CD4-positive, alpha-beta memory T cell (primary cell): ENCODE measurements at regions of chr10 and their contacts with region 1.

Region 1: DNA sequence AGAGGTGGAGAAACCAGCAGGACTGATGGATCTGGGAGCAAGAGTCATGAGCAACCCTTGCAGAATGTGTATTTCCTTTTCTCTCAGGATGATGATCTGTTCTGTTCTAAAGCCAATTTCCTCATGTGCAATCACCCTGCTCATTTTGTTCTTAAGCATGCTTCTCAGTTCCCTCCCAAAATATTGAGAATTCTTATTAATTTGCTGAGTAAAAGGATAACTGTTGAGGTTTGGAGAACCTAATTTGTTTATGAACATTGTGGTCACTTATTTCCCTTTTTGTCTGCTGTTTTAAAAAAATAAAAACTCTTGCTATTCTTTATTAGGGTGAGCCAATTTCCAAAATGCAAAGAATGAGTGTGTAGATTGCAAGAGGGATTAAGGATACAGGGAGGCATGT is 106.8 kb downstream of the APBB1IP start:
- DNase-seq: no peak
- H3K4me3 ChIP-seq: no peak overlapping the region
- H3K4me3 Mint-ChIP-seq: no peak overlapping the region
- H3K27ac ChIP-seq: no peak overlapping the region
- H3K27ac Mint-ChIP-seq: peak overlapping the region in 5 of 7 donors; percentile 42 to 93 (median 79)
- H3K4me1 ChIP-seq: peaks cover 3% of the 10 kb centered on the region
- H3K4me1 Mint-ChIP-seq: peaks cover 8 to 23% (median 15%) of the 10 kb centered on the region in 4 donors
- H3K27me3 ChIP-seq: no peaks in the 10 kb centered on the region
- H3K27me3 Mint-ChIP-seq: no peaks in the 10 kb centered on the region

Region 2: DNA sequence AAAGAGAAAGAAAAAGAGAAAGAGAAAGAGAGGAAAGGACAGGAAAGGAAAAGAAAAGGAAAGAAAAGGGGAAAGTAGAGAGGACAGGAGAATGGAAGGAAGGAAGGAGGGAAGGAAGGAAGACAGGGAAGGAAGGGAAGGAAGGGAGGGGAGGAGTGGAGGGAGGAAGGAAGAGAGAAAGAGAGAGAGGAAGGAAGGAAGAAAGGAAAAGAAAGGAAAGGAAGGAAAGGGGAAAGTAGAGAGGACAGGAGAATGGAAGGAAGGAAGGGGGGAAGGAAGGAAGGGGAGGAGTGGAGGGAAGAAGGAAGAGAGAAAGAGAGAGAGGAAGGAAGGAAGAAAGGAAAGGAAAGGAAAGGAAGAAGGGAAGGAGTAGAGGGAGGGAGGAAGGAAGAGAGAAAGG is 203.2 kb before region 1 on chr10:
- CTCF ChIA-PET with region 1: no interaction called
- POLR2A ChIA-PET with region 1: no interaction called
- intact Hi-C with region 1: no loop called
- DNase-seq: no peak
- H3K4me3 ChIP-seq: no peak overlapping the region
- H3K4me3 Mint-ChIP-seq: no peak overlapping the region
- H3K27ac ChIP-seq: no peak overlapping the region
- H3K27ac Mint-ChIP-seq: no peak overlapping the region
- H3K4me1 ChIP-seq: no peaks in the 10 kb centered on the region
- H3K4me1 Mint-ChIP-seq: peaks cover 0 to 5% (median 0%) of the 10 kb centered on the region in 4 donors
- H3K27me3 ChIP-seq: no peaks in the 10 kb centered on the region
- H3K27me3 Mint-ChIP-seq: no peaks in the 10 kb centered on the region

Region 3: DNA sequence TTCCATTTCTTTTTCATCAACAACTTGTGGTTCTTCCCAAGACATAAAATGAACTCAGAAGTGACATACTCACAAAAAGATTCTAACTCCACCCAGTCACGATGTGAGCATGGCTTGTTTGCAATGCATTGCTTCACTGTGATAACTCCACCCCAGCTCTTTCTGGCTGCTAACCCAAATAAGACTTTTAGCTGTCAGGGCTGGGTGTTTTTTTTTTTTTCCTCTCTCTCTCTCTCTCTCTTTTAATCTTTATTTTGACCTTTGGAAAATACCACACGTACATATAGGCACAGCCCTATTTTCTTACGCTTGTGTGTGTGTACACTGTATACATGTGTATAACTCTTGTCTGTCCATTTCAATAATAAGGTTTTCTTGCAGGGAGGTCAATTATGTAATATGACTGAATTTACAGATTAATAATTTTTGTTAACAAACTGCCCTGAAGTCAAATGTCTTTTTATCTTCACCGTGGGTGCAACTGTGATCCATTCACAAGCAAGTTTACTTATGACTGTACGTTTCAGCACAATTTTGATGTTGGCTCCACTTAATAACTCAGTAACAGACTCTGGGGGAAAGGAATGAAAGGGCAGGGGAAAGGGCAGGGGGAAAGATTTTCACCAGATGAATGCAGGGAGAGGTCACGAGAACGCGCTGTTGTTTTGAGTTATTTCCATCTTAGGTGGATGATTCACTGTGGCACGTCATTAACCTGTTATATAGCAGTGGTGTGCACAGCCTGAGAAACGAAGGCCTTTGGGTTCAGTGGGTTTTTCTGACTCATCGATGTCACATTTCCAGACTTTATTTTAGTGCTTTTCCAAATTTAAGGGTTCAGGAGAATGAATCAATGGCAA is 57.7 kb before region 1 on chr10:
- CTCF ChIA-PET with region 1: no interaction called
- POLR2A ChIA-PET with region 1: no interaction called
- intact Hi-C with region 1: loop called (anchors 5 kb)
- DNase-seq: peak; percentile 58 to 91 (median 70)
- H3K4me3 ChIP-seq: peak overlapping the region in 1 of 2 donors; percentile 49
- H3K4me3 Mint-ChIP-seq: peak overlapping the region; percentile 55 to 77 (median 68)
- H3K27ac ChIP-seq: peak overlapping the region; percentile 73
- H3K27ac Mint-ChIP-seq: peak overlapping the region; percentile 94 to 97 (median 95)
- H3K4me1 ChIP-seq: peaks cover 76% of the 10 kb centered on the region
- H3K4me1 Mint-ChIP-seq: peaks cover 53 to 67% (median 58%) of the 10 kb centered on the region in 4 donors
- H3K27me3 ChIP-seq: no peaks in the 10 kb centered on the region
- H3K27me3 Mint-ChIP-seq: no peaks in the 10 kb centered on the region